Endothelial cell of umbilical vein (primary cell): ENCODE measurements at regions of chr2 and their contacts with region 1.

Region 1: DNA sequence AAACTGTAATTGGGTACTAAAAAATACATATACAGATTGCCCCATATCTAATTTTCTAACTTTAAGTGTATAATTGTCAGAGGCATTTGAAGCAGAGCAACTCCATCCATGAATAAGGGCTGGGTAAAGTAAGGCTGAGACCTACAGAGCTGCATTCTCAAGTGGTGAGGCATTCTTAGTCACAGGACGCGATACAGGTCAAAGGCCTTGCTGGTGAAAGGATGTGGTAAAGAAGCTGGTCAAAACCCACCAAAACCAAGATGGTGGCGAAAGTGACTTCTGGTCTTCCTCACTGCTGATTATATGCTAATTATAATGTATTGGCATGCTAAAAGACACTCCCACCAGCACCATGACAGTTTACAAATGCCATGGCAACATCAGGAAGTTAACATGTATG is 50.0 kb downstream of the SLC8A1 start:
- DNase-seq: peak; percentile 67
- H3K4me3 ChIP-seq: no peak overlapping the region
- H3K27ac ChIP-seq: peak overlapping the region; percentile 59
- H3K4me1 ChIP-seq: peaks cover 26% of the 10 kb centered on the region
- H3K27me3 ChIP-seq: no peaks in the 10 kb centered on the region
- CTCF ChIP-seq: no peak
- POLR2A ChIP-seq: peak; percentile 18

Region 2: GRCh38 chr2:40418614-40419363 is 16.9 kb after region 1 on chr2:
- CTCF ChIA-PET with region 1: interaction called, 10 read pairs
- POLR2A ChIA-PET with region 1: no interaction called
- dilution Hi-C with region 1: no loop called
- intact Hi-C with region 1: no loop called
- DNase-seq: no peak
- H3K4me3 ChIP-seq: no peak overlapping the region
- H3K27ac ChIP-seq: no peak overlapping the region
- H3K4me1 ChIP-seq: no peaks in the 10 kb centered on the region
- H3K27me3 ChIP-seq: no peaks in the 10 kb centered on the region
- CTCF ChIP-seq: no peak
- POLR2A ChIP-seq: no peak

Region 3: GRCh38 chr2:40511661-40512213 is 109.8 kb after region 1 on chr2:
- CTCF ChIA-PET with region 1: no interaction called
- POLR2A ChIA-PET with region 1: no interaction called
- dilution Hi-C with region 1: no loop called
- intact Hi-C with region 1: no loop called
- DNase-seq: peak; percentile 87
- H3K4me3 ChIP-seq: peak overlapping the region in 1 of 3 experiments; percentile 34
- H3K27ac ChIP-seq: peak overlapping the region; percentile 68
- H3K4me1 ChIP-seq: peaks cover 16% of the 10 kb centered on the region
- H3K27me3 ChIP-seq: no peaks in the 10 kb centered on the region
- CTCF ChIP-seq: no peak
- POLR2A ChIP-seq: no peak

Region 4: GRCh38 chr2:40629768-40630434 is 228.0 kb after region 1 on chr2:
- CTCF ChIA-PET with region 1: no interaction called
- POLR2A ChIA-PET with region 1: no interaction called
- dilution Hi-C with region 1: no loop called
- intact Hi-C with region 1: no loop called
- DNase-seq: no peak
- H3K4me3 ChIP-seq: no peak overlapping the region
- H3K27ac ChIP-seq: no peak overlapping the region
- H3K4me1 ChIP-seq: no peaks in the 10 kb centered on the region
- H3K27me3 ChIP-seq: no peaks in the 10 kb centered on the region
- CTCF ChIP-seq: no peak
- POLR2A ChIP-seq: no peak

Region 5: GRCh38 chr2:40746154-40746553 is 344.3 kb after region 1 on chr2:
- CTCF ChIA-PET with region 1: no interaction called
- POLR2A ChIA-PET with region 1: no interaction called
- dilution Hi-C with region 1: no loop called
- intact Hi-C with region 1: no loop called
- DNase-seq: no peak
- H3K4me3 ChIP-seq: no peak overlapping the region
- H3K27ac ChIP-seq: no peak overlapping the region
- H3K4me1 ChIP-seq: no peaks in the 10 kb centered on the region
- H3K27me3 ChIP-seq: no peaks in the 10 kb centered on the region
- CTCF ChIP-seq: no peak
- POLR2A ChIP-seq: no peak